Activated T-helper 1 cell treated with anti-CD3 and anti-CD28 coated beads, Interleukin-12 subunit alpha, Interleukin-12 subunit beta, Interleukin-2, Interleukin-4 antibody, amounts not matched to agents 30 ng/mL and 10 ng/mL and 1 ng/mL, durations not matched to agents 14 hours and 24 hours and 36 hours (primary cell): ENCODE measurements at regions of chr4 and their contacts with region 1.

Region 1: DNA sequence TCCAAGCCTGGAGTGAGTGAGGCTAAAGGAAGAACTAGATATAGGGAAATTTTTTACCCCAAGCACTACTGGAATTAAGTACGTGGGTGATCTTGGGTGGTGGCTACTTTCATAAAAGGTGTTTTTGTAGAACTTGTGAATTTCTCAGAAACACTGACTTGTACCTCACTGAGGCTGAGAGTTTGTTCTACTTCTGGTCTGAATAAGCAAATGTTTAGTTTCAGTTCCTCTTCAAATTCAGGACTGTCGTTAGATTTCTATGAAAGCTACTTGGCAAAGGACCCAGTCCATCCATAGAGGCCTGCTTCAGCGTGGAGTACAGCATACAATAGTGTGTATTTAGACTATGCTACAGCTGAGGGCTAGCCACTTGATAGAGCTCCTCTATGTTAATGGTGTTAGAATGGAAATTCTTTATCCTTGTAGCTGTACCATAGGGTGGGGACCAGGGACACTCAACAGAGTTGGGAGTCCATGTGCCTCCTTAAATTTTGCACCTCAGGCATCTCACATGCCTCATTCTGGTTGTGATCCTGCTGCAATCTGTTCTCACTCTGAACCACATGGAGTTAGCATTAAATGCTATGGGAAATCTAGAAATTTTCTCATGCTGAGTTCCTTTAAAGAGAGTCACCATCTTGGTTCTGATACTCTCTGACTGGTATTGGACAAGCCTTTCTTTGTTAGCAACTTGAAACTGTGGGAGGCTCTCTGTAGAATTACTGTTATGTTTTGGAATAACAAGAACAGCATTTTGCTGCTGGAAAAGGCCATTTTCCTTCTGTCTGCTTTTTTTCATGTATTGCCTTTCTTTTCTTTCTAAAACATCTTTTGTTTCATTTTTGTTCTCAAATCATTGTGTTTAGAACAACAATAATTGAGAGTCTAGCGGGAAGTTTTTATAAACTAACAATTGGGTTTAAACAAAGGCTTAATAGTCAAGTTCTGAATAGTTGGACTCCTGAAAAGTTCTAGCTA is 86.8 kb downstream of the PDGFRA start:
- DNase-seq: peak; percentile 3
- H3K4me3 Mint-ChIP-seq: peak overlapping the region; percentile 28
- H3K27ac Mint-ChIP-seq: peak overlapping the region; percentile 75
- H3K4me1 Mint-ChIP-seq: peaks cover 47% of the 10 kb centered on the region
- H3K27me3 Mint-ChIP-seq: peaks cover 5% of the 10 kb centered on the region

Region 2: DNA sequence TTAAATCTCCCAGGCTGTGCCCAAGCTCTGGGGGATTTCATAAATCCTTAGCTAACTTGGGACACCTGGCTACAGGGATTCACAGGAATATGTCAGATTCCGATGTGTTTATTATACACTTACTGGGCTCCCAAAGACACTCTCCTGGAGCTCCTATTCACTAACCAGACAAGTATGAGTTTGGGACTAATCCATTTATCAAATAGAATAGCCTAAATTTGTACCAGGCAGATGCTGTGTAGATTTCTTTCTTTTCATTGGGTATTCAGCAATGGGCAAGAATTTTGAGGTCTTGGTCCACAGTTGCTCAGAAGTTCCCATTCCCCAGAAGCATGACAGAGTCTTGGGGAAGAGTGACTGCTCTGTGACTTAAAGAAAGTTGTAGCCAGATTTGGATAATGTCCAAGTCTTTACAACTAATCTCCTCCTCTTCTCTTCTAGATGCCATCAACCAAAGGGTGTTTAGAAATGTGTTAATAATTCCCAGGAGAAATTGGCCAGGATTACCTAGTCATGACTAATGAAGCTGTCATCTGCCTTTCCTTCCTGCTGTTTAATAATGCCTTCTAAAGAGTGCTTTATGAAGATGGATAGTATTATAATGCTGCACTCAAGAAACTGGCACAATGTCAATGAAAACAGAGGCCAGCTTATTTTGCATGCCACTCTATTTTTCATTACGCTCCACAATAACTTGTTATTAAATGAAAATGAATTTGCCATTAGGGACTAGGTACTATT is 372.3 kb before region 1 on chr4:
- intact Hi-C with region 1: no loop called
- DNase-seq: no peak
- H3K4me3 Mint-ChIP-seq: no peak overlapping the region
- H3K27ac Mint-ChIP-seq: no peak overlapping the region
- H3K4me1 Mint-ChIP-seq: no peaks in the 10 kb centered on the region
- H3K27me3 Mint-ChIP-seq: peaks cover 2% of the 10 kb centered on the region

Region 3: DNA sequence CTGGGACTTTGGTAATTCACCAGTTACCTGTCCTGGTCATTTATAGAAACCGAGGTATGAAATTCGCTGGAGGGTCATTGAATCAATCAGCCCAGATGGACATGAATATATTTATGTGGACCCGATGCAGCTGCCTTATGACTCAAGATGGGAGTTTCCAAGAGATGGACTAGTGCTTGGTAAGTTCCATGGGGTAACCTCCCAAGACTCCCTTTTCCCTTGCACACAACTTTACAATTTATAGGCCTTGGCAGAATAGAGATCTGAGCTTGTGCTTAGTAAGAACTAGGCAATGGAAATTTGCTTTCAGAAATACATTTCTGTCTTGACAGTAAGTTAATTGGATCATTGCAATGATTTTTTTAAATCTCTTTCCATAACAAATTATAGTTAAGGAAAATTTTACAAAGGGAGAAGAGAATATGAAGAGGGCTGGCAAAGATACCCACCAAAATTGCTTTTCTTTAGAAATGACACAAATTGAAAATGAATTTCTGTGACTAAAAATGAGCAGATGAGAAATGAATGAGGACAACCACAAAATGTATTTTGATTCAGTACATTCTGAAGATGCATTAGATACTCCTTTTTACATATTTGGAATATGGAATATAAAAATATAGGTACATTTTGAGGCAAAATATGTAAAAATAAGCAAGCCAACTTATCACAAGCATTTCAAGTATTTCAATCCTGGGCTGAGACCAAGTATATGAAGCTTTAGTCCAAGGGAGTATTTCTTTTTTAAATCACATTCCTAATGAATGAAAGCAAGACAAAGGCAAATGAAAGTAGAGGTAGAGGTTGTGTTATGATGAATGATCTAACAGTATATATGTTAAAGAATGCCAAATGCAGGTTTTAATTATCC is 40.8 kb before region 1 on chr4:
- intact Hi-C with region 1: loop called (anchors 1 kb)
- DNase-seq: no peak
- H3K4me3 Mint-ChIP-seq: no peak overlapping the region
- H3K27ac Mint-ChIP-seq: peak overlapping the region; percentile 14
- H3K4me1 Mint-ChIP-seq: peaks cover 24% of the 10 kb centered on the region
- H3K27me3 Mint-ChIP-seq: peaks cover 2% of the 10 kb centered on the region

Region 4: DNA sequence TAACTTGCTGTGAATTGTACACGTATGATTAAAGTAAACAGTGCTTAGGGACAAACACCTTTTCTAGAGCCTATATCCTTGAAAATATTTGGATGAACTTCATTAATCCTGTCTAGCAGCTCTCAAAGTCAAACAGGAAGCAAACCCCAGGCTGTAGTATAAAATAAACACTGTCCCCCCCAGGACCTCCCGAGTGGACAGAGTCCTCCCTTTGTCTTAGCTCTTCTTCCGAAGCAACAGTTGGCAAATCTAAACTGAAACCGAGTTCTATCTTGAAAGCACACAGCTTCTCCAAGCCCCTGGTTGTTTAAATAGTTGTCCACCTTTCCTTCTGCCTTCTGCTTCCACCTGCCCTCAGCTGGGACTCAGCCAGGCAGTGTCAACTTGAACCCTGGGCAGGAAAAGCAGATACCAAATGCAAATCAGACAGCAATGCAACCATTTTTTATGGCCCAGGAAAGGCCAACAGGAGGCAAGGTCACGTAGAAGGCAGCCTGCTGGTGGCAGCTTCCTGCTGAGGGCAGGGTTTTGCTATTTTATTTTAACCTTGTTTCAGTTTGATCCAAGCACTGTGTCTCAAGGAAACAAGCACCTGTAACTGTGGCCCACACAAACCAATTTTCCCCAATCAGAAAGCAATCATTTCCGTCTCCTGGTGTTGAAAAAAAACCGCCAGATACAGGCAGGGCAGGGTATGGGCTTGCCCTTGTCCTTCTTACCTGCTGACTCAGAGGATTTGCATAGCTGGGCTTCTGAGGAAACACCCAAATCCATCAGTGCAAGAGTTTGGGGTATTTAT is 231.6 kb after region 1 on chr4:
- intact Hi-C with region 1: loop called (anchors 1 kb)
- DNase-seq: no peak
- H3K4me3 Mint-ChIP-seq: peak overlapping the region; percentile 20
- H3K27ac Mint-ChIP-seq: peak overlapping the region; percentile 90
- H3K4me1 Mint-ChIP-seq: peaks cover 9% of the 10 kb centered on the region
- H3K27me3 Mint-ChIP-seq: peaks cover 2% of the 10 kb centered on the region

Region 5: DNA sequence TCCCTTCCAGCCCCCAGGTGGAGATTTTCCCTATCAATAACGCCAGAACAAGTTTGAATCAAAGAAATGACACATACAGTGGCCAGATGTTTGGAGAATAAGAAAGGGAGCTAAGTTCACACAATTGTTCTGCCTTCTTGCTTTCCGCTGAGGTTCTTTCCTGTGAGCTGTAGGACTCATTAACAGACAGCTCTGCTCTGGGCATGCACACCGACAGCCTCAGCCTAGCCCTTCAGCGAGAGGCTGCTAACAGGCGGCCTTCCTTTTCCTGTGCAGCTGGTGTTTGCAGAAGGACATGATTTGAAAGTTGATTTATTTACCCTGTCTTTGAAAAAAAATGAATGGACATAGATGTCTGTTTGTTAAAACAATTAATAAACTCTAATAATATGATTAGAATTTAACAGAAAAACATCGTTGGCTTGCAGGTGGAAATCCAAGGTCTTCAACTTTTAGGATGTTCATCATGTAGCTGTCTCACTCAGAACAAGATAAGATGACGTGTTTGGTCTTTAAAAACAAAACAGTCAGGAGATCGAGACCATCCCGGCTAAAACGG is 626.2 kb after region 1 on chr4:
- intact Hi-C with region 1: loop called (anchors 1 kb)
- DNase-seq: peak; percentile 16
- H3K4me3 Mint-ChIP-seq: peak overlapping the region; percentile 43
- H3K27ac Mint-ChIP-seq: peak overlapping the region; percentile 38
- H3K4me1 Mint-ChIP-seq: peaks cover 34% of the 10 kb centered on the region
- H3K27me3 Mint-ChIP-seq: no peaks in the 10 kb centered on the region